B cell (primary cell): ENCODE measurements at regions of chr20 and their contacts with region 1.

Region 1: GRCh38 chr20:23995905-23996666 is 7.5 kb upstream of the GGTLC1 start:
- DNase-seq: peak; percentile 53
- ATAC-seq: no peak
- H3K4me3 ChIP-seq: no peak overlapping the region
- H3K4me3 Mint-ChIP-seq: no peak overlapping the region
- H3K27ac ChIP-seq: no peak overlapping the region
- H3K27ac Mint-ChIP-seq: no peak overlapping the region
- H3K4me1 ChIP-seq: no peaks in the 10 kb centered on the region
- H3K4me1 Mint-ChIP-seq: no peaks in the 10 kb centered on the region
- H3K27me3 ChIP-seq: peaks cover 0 to 4% (median 0%) of the 10 kb centered on the region in 4 experiments
- H3K27me3 Mint-ChIP-seq: peaks cover 18% of the 10 kb centered on the region
- CTCF ChIP-seq: peak; percentile 84

Region 2: DNA sequence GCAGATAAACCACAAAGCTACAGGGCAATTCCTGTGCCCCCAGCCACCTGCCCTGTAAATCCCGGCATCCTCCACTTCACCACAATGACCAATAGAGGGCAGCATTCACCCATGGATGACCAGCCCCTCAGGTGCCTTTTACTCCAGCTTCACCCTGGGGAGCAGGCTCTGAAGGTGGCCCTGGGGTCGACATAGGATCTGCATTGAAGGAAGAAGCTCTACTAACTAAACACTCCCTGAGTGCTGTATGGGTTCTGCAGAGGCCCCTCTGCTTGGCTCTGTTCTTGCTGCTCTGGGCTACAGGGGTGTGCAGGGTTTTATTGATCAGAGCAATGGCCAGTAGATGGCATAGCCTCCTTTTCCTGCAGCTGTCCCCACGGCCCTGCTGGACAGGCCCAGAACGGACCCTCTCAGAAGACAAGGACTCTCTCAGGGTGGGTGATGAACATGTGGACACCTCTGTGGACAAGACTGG is 327.6 kb before region 1 on chr20:
- CTCF ChIA-PET with region 1: no interaction called
- POLR2A ChIA-PET with region 1: no interaction called
- intact Hi-C with region 1: loop called (anchors 5 kb)
- DNase-seq: peak; percentile 46
- ATAC-seq: peak; percentile 47
- H3K4me3 ChIP-seq: no peak overlapping the region
- H3K4me3 Mint-ChIP-seq: no peak overlapping the region
- H3K27ac ChIP-seq: no peak overlapping the region
- H3K27ac Mint-ChIP-seq: no peak overlapping the region
- H3K4me1 ChIP-seq: no peaks in the 10 kb centered on the region
- H3K4me1 Mint-ChIP-seq: no peaks in the 10 kb centered on the region
- H3K27me3 ChIP-seq: no peaks in the 10 kb centered on the region
- H3K27me3 Mint-ChIP-seq: no peaks in the 10 kb centered on the region
- CTCF ChIP-seq: peak; percentile 71

Region 3: DNA sequence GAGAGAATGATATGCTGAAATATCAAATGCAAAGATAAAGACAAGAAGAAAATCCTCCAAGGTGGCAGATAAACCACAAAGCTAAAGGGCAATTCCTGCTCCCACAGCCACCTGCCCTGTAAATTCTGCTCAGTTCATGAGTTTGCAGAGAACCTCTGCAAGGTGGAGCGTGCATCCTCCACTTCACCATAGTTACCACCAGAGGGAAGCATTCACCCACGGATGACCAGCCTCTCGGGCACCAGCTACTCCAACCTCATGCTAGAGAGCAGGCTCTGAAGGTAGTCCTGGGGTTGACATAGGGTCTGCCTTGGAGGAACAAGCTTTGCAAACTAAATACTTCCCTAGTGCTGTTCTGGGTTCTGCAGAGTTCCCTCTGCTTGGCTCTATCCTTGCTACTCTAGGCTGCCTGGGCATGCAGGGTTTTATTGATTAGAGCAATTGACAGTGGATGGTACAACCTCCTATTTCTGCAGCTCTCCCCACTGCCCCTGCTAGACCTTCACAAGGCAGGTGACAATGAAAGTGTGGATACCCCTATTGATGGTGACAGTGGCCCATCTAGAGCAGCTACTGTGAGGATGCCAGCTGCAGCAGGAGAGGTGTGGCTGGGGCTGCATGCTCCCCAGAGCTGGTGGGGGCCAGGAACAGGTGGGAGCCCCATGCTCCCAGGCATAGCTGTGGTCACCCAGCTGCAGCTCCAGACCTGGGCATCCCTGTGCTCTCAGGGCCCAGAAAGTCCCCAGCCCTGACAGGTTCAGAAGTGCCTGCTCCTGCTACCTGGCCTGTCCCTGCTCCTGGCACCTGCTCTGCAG is 58.6 kb before region 1 on chr20:
- CTCF ChIA-PET with region 1: interaction called, 5 read pairs
- POLR2A ChIA-PET with region 1: no interaction called
- intact Hi-C with region 1: loop called (anchors 1 kb)
- DNase-seq: peak; percentile 46
- ATAC-seq: peak; percentile 49
- H3K4me3 ChIP-seq: no peak overlapping the region
- H3K4me3 Mint-ChIP-seq: no peak overlapping the region
- H3K27ac ChIP-seq: no peak overlapping the region
- H3K27ac Mint-ChIP-seq: no peak overlapping the region
- H3K4me1 ChIP-seq: no peaks in the 10 kb centered on the region
- H3K4me1 Mint-ChIP-seq: no peaks in the 10 kb centered on the region
- H3K27me3 ChIP-seq: no peaks in the 10 kb centered on the region
- H3K27me3 Mint-ChIP-seq: peaks cover 3% of the 10 kb centered on the region
- CTCF ChIP-seq: peak; percentile 56